CD14-positive monocyte (primary cell): ENCODE measurements at regions of chr4 and their contacts with region 1.

Region 1: GRCh38 chr4:105471566-105472176 is 2.2 kb downstream of the PPA2 start:
- DNase-seq: peak; percentile 56 to 82 (median 74)
- H3K4me3 ChIP-seq: peak overlapping the region in 2 of 3 experiments; percentile 37 to 66
- H3K4me3 Mint-ChIP-seq: peak overlapping the region; percentile 64 to 75
- H3K27ac ChIP-seq: peak overlapping the region in 1 of 2 donors; percentile 96
- H3K27ac Mint-ChIP-seq: peak overlapping the region; percentile 30 to 99 (median 90)
- H3K4me1 ChIP-seq: peaks cover 37 to 43% of the 10 kb centered on the region in 2 donors
- H3K4me1 Mint-ChIP-seq: peaks cover 47% of the 10 kb centered on the region
- H3K27me3 ChIP-seq: no peaks in the 10 kb centered on the region
- H3K27me3 Mint-ChIP-seq: peaks cover 0 to 3% (median 1%) of the 10 kb centered on the region in 3 donors
- CTCF ChIP-seq: peak; percentile 84

Region 2: DNA sequence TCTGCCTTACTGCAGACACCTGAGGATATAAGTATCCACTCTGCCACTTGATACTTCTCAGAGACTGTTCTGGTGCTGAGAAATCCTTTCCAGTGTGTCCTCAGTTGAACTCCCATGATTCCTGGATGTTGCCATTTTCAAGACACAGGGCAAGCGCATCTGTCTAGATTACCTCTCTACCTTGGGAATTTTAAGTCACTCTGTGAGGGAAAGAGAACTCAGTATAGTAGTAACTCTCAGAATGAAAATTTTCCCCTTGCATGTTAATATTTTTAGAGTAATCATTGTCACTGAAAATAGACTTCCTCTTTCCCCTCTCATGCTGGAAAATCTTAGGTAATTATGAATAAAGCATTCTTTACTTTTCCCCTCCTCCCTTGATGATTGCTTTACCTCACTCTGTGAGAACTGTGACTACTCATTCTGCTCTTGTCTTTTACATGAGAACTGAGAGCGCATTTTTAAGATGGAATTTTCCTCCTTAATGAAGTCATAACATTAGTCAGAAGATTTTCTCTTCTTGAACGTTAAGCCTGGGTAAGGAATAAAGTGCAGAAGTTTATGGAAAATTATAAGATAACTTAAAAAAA is 280.0 kb before region 1 on chr4:
- intact Hi-C with region 1: loop called in 1 of 2 experiments (anchors 5 kb)
- DNase-seq: peak; percentile 36 to 78 (median 58)
- H3K4me3 ChIP-seq: no peak overlapping the region
- H3K4me3 Mint-ChIP-seq: no peak overlapping the region
- H3K27ac ChIP-seq: peak overlapping the region in 1 of 2 donors; percentile 78
- H3K27ac Mint-ChIP-seq: peak overlapping the region; percentile 68 to 93 (median 86)
- H3K4me1 ChIP-seq: peaks cover 43 to 56% of the 10 kb centered on the region in 2 donors
- H3K4me1 Mint-ChIP-seq: peaks cover 66% of the 10 kb centered on the region
- H3K27me3 ChIP-seq: no peaks in the 10 kb centered on the region
- H3K27me3 Mint-ChIP-seq: no peaks in the 10 kb centered on the region
- CTCF ChIP-seq: no peak

Region 3: GRCh38 chr4:105306158-105306781 is 165.4 kb before region 1 on chr4:
- intact Hi-C with region 1: no loop called
- DNase-seq: peak; percentile 20 to 67 (median 38)
- H3K4me3 ChIP-seq: no peak overlapping the region
- H3K4me3 Mint-ChIP-seq: no peak overlapping the region
- H3K27ac ChIP-seq: peak overlapping the region in 1 of 2 donors; percentile 15
- H3K27ac Mint-ChIP-seq: peak overlapping the region in 5 of 7 donors; percentile 41 to 82 (median 74)
- H3K4me1 ChIP-seq: peaks cover 15 to 27% of the 10 kb centered on the region in 2 donors
- H3K4me1 Mint-ChIP-seq: peaks cover 25% of the 10 kb centered on the region
- H3K27me3 ChIP-seq: no peaks in the 10 kb centered on the region
- H3K27me3 Mint-ChIP-seq: no peaks in the 10 kb centered on the region
- CTCF ChIP-seq: no peak